ENCODE measurements at regions of chr7 and their contacts with region 1.

Region 1: DNA sequence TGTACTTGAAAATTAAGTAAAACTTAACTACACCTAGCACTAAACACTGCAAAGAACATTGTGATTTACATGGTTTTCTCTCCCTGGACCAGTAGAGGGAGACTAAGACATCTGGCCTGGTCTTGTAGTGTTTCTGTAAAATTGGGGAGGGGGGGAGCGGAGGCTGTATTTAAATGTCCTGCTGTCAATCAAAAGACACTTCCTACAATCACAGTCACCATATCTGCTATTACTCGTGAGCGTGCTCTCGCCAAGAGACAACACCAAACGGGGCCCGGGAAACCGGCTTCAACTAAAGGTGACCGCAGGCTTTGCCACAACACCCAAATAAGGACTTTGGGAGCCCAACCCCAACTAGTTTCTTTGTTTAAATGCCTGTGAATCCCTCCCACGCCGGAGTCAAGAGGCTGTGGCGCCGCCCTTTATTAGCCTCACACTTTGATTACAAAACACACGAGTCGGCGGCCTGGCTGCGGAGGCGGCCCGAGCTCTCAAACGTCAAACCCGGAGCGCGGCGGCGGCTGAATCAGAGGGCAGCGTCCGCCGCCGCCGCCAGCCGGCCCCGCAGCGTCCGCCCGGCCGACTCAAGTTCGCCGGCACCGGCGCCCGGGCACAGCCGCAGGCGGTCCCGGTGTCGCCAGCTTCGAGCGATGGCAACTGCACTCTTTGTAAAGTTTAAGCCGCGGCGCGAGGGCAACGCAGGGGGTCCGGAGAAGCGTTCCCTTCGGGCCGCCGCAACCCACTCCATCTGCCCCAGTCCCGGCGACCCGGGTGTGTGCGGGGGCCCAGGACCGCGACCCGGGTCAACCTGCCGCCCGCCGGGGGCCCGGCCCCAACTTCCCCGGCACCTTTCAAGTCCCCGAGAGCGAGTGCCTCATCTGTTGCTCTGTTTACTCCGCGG is 1.3 kb downstream of the KDM7A start:
- DNase-seq: peak; percentile 91
- ATAC-seq: peak; percentile 59
- H3K4me3 ChIP-seq: peak overlapping the region; percentile 55 to 73
- H3K27ac ChIP-seq: peak overlapping the region; percentile 78
- H3K4me1 ChIP-seq: peaks cover 6 to 12% of the 10 kb centered on the region in 2 experiments; a peak in 3 of 4 replicates
- H3K27me3 ChIP-seq: no peaks in the 10 kb centered on the region
- CTCF ChIP-seq: peak; percentile 78 to 86 (median 84); a peak in 5 of 6 replicates
- POLR2A ChIP-seq: no peak
- RAD21 ChIP-seq: peak; percentile 87

Region 2: DNA sequence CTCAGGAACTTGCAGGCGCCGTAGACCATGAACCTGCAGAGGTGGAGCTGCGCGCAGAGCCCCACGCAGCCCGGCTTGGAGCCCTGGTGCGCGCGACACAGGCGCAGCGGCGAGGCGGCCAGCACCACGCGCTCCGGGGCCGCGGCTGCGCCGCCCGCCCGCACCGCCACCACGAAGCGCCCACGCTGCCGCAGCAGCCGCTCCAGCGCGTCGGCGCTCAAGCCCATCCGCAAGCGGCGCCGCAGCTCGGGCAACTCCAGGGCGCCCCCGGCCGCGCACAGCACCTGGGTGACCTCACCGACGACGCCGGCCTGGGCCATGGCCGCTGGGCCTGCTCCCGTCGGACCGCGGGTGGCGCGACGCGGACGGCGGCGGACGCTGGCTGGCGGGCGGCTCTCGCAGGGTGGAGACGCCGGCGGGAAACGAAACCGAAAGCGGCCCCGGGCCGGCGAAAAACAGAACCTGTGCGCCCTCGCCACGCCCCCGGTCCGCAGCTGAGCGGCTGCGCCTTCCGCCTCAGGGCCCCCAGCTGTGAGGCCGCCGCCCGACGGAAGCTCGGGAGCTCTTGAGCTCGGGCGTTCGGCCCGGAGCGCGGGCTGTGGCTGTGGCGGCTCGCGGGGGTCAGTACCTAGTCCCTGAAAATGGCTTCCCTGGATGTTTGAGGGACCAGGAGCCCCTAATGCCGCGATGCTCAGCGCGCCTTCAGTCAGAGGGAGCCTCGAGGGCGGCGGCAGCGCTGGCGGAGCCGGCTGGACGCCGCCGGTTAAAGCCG is 112.8 kb before region 1 on chr7 and contains the start of gene PARP12:
- CTCF ChIA-PET with region 1: no interaction called
- POLR2A ChIA-PET with region 1: no interaction called
- RAD21 ChIA-PET with region 1: no interaction called
- intact Hi-C with region 1: loop called (anchors 5 kb)
- DNase-seq: no peak
- ATAC-seq: peak; percentile 70
- H3K4me3 ChIP-seq: peak within 1 kb of the TSS; percentile 52 to 67
- H3K27ac ChIP-seq: peak within 1 kb of the TSS; percentile 63
- H3K4me1 ChIP-seq: peaks cover 25 to 54% of the 10 kb centered on the region in 2 experiments
- H3K27me3 ChIP-seq: no peaks in the 10 kb centered on the region
- CTCF ChIP-seq: no peak
- POLR2A ChIP-seq: no peak
- RAD21 ChIP-seq: no peak
- total RNA-seq, gene PARP12: 17.7 TPM

Region 3: GRCh38 chr7:140260352-140261104 is 85.1 kb after region 1 on chr7:
- CTCF ChIA-PET with region 1: no interaction called
- POLR2A ChIA-PET with region 1: no interaction called
- RAD21 ChIA-PET with region 1: no interaction called
- intact Hi-C with region 1: no loop called
- DNase-seq: no peak
- ATAC-seq: no peak
- H3K4me3 ChIP-seq: no peak overlapping the region
- H3K27ac ChIP-seq: no peak overlapping the region
- H3K4me1 ChIP-seq: no peaks in the 10 kb centered on the region
- H3K27me3 ChIP-seq: no peaks in the 10 kb centered on the region
- CTCF ChIP-seq: no peak
- POLR2A ChIP-seq: no peak
- RAD21 ChIP-seq: no peak

Region 4: DNA sequence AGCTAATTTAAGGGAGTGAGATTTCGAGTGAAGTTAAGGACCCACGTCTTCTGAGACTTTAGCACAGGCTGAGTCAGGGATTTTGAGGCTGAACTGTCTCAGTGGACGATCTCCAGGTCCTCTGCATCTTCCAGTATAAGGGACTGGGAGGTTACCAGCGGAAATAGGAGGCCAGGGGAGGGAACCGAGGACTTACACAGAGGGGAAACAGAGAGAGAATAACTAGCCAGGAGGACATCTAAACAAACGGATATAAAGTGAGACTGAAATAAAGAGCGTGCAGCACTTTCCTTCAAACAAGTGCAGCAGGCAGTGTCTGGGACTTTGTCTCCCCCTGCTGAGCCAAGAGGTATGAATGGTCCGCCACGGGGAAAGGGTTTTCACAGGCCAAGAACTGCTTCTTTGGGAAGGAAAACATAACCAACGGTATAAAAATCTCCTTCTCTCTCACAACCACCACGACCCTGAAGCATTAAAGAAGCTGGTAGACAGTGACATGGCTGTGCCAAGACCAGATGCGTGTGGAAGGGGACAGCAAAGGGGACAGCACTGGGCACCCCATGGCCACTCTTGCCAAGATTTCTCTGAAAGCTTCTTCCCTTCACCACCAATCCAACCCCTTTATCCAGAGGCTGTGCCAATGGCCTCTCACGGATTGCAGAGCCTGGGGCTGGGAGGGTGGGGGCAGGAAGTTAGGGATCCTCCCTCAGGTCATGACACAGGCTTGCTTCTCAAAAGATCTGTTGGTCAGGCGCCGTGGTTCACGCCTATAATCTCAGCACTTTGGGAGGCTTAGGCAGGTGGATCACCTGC is 150.9 kb after region 1 on chr7:
- CTCF ChIA-PET with region 1: no interaction called
- POLR2A ChIA-PET with region 1: no interaction called
- RAD21 ChIA-PET with region 1: no interaction called
- intact Hi-C with region 1: loop called (anchors 1 kb)
- DNase-seq: no peak
- ATAC-seq: peak; percentile 80
- H3K4me3 ChIP-seq: no peak overlapping the region
- H3K27ac ChIP-seq: no peak overlapping the region
- H3K4me1 ChIP-seq: no peaks in the 10 kb centered on the region
- H3K27me3 ChIP-seq: no peaks in the 10 kb centered on the region
- CTCF ChIP-seq: peak; percentile 39 to 53 (median 46); a peak in 5 of 6 replicates
- POLR2A ChIP-seq: no peak
- RAD21 ChIP-seq: peak; percentile 80

Region 5: GRCh38 chr7:140364819-140365218 is 189.3 kb after region 1 on chr7:
- CTCF ChIA-PET with region 1: no interaction called
- POLR2A ChIA-PET with region 1: no interaction called
- RAD21 ChIA-PET with region 1: no interaction called
- intact Hi-C with region 1: no loop called
- DNase-seq: no peak
- ATAC-seq: no peak
- H3K4me3 ChIP-seq: no peak overlapping the region
- H3K27ac ChIP-seq: no peak overlapping the region
- H3K4me1 ChIP-seq: no peaks in the 10 kb centered on the region
- H3K27me3 ChIP-seq: no peaks in the 10 kb centered on the region
- CTCF ChIP-seq: no peak
- POLR2A ChIP-seq: no peak
- RAD21 ChIP-seq: no peak

Region 6: GRCh38 chr7:140403878-140404564 is 228.6 kb after region 1 on chr7 and contains the start of gene RAB19:
- CTCF ChIA-PET with region 1: no interaction called
- POLR2A ChIA-PET with region 1: no interaction called
- RAD21 ChIA-PET with region 1: no interaction called
- intact Hi-C with region 1: loop called (anchors 5 kb)
- DNase-seq: peak; percentile 16
- ATAC-seq: peak; percentile 94
- H3K4me3 ChIP-seq: peak within 1 kb of the TSS; percentile 59 to 74
- H3K27ac ChIP-seq: peak within 1 kb of the TSS; percentile 9; the same call in 1 of the 2 replicates
- H3K4me1 ChIP-seq: peaks cover 9 to 18% of the 10 kb centered on the region in 2 experiments; a peak in 3 of 4 replicates
- H3K27me3 ChIP-seq: no peaks in the 10 kb centered on the region
- CTCF ChIP-seq: no peak
- POLR2A ChIP-seq: no peak
- RAD21 ChIP-seq: no peak
- total RNA-seq, gene RAB19: 2.6 TPM

Region 7: DNA sequence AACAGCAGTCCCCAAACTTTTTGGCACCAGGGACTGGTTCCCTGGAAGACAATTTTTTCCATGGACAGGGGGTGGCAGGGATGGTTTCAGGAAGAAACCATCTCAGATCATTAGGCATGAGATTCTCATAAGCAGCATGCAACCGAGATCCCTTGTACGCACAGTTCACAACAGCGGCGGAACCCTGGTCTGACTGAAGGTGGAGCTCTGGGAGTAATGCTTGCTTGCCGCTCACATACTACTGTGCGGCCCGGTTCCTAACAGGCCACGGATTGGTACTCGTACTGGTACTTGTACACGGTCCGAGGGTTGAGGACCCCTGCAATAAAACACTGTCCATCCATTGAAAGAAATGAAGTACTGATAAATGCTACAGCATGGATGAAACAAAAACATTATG is 271.0 kb after region 1 on chr7:
- CTCF ChIA-PET with region 1: no interaction called
- POLR2A ChIA-PET with region 1: no interaction called
- RAD21 ChIA-PET with region 1: no interaction called
- intact Hi-C with region 1: loop called (anchors 10 kb)
- DNase-seq: no peak
- ATAC-seq: no peak
- H3K4me3 ChIP-seq: no peak overlapping the region
- H3K27ac ChIP-seq: no peak overlapping the region
- H3K4me1 ChIP-seq: peaks cover 4 to 6% of the 10 kb centered on the region in 2 experiments
- H3K27me3 ChIP-seq: no peaks in the 10 kb centered on the region
- CTCF ChIP-seq: no peak
- POLR2A ChIP-seq: no peak
- RAD21 ChIP-seq: no peak

Region 8: DNA sequence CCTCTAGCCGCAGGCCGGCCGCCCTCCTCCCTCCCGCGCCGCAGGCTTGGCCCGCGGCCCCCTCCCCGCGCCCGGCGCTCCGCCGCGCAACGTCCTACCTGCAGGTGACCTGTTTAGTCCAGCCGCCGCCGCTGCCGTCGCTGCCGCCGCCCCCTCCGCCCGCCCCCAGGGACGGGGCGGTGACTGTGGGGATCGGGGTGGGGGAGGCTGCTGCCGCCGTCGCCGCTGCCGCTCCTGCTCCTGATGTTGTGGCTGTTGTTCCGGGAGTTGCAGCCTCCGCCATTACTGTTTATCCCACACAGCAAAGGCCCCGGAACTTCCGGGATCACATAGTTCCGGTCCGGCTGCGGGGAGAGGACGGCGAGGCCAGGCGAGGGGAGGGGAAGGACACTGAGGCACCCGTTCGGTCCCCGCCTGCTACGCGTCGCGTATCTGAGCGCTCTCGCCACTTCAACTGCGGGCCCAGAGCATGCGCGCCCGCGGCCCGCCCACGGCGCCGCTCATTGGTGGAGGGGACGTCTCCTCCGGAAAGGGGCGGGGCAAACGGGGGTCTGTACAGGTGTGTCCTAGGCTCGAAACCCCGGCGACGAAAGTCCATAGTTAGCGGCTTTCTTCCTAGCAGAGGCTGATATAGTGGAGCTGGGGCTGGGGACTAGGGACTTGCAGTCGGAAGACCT is 303.7 kb after region 1 on chr7 and contains the start of gene MKRN1:
- CTCF ChIA-PET with region 1: no interaction called
- POLR2A ChIA-PET with region 1: no interaction called
- RAD21 ChIA-PET with region 1: no interaction called
- intact Hi-C with region 1: loop called (anchors 10 kb)
- DNase-seq: peak; percentile 92
- ATAC-seq: peak; percentile 96
- H3K4me3 ChIP-seq: peak within 1 kb of the TSS; percentile 91 to 97
- H3K27ac ChIP-seq: peak within 1 kb of the TSS; percentile 84
- H3K4me1 ChIP-seq: peaks cover 8 to 15% of the 10 kb centered on the region in 2 experiments; a peak in 2 of 4 replicates
- H3K27me3 ChIP-seq: no peaks in the 10 kb centered on the region
- CTCF ChIP-seq: no peak
- POLR2A ChIP-seq: no peak
- RAD21 ChIP-seq: no peak
- total RNA-seq, gene MKRN1: 95.0 TPM

Region 9: DNA sequence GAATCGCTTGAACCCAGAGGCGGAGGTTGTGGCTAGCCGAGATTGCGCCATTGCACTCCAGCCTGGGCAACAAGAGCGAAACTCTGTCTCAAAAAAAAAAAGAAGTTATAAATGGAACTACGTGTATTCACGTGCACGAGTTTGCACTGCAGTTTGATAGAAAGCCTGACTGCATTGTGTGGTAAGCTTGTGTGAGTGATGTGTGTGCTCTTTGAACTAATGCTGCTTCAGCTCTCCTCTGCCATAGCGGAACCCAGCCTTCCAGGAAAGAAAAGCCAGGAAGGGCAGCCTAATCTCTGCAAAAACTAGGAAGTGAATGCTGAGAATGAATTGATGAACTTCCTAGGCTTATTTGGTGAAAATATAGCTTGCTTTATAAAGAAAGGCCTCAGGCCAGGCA is 319.4 kb after region 1 on chr7:
- CTCF ChIA-PET with region 1: no interaction called
- POLR2A ChIA-PET with region 1: no interaction called
- RAD21 ChIA-PET with region 1: no interaction called
- intact Hi-C with region 1: loop called (anchors 5 kb)
- DNase-seq: no peak
- ATAC-seq: no peak
- H3K4me3 ChIP-seq: no peak overlapping the region
- H3K27ac ChIP-seq: no peak overlapping the region
- H3K4me1 ChIP-seq: peaks cover 0 to 4% of the 10 kb centered on the region in 2 experiments; a peak in 1 of 4 replicates
- H3K27me3 ChIP-seq: no peaks in the 10 kb centered on the region
- CTCF ChIP-seq: no peak
- POLR2A ChIP-seq: no peak
- RAD21 ChIP-seq: no peak